ENCODE measurements at regions of chr3 and their contacts with region 1.

Region 1: GRCh38 chr3:11643605-11644087 is at the start of gene VGLL4:
- DNase-seq: peak; percentile 83 to 86
- ATAC-seq: peak; percentile 68 to 70
- H3K4me3 ChIP-seq: peak within 1 kb of the TSS; percentile 54 to 74 (median 70)
- H3K27ac ChIP-seq: peak within 1 kb of the TSS; percentile 90 to 95 (median 92)
- H3K4me1 ChIP-seq: peaks cover 28 to 32% of the 10 kb centered on the region in 2 donors
- H3K27me3 ChIP-seq: no peaks in the 10 kb centered on the region
- CTCF ChIP-seq: peak in 3 of 5 experiments; percentile 10 to 33 (median 16)
- POLR2A ChIP-seq: peak; percentile 77 to 88
- total RNA-seq, gene VGLL4: 8.9 to 20.9 (median 12.8) TPM

Region 2: GRCh38 chr3:11465744-11466616 is 177.7 kb before region 1 on chr3:
- in situ Hi-C with region 1: no loop called
- intact Hi-C with region 1: loop called (anchors 1 kb)
- DNase-seq: peak; percentile 47 to 57
- ATAC-seq: peak; percentile 52 to 72
- H3K4me3 ChIP-seq: no peak overlapping the region
- H3K27ac ChIP-seq: peak overlapping the region; percentile 83 to 87 (median 86)
- H3K4me1 ChIP-seq: peaks cover 47 to 52% of the 10 kb centered on the region in 2 donors
- H3K27me3 ChIP-seq: no peaks in the 10 kb centered on the region
- CTCF ChIP-seq: no peak
- POLR2A ChIP-seq: no peak

Region 3: DNA sequence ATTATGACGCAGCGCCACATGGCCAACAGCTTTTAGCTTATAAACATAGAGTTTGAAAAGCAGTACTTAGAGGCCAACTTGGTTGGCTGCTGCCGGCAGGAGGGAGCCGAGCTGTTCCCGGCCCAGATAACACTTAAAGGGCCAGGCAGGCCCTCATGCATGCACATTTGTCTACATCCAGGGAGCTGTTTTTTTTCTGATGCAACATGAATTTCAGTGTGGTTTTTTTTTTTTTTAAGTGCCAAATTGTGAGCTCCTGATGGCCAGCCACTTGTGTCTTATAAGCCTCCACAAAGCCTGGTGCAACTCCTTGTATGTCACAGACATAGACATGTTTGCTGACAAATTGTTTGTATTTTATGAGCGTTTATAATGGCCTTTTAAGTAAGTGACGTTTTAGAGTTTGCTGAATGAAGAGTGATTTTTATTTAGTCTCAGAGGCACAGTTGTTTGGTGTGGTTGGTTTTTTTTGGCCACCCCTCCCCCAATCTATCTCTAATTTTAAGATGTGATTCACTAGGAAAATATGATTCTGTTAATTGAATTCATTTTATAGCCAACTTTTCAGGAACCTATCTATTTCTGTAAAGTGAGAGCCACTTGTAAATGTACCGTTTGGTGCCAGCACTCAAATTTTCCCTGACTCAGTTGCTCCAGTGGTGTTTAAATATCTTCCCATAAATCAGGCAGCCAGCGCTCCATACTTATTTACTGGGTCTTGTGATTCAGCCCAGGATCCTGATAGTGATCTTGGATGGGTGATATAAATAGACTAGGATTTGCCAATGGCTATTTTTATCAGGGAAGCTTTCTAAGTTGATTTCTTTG is 134.3 kb before region 1 on chr3:
- in situ Hi-C with region 1: no loop called
- intact Hi-C with region 1: loop called (anchors 2 kb)
- DNase-seq: peak; percentile 32 to 59
- ATAC-seq: peak; percentile 86 to 89
- H3K4me3 ChIP-seq: peak overlapping the region in 2 of 4 donors; percentile 0 to 15
- H3K27ac ChIP-seq: peak overlapping the region; percentile 76 to 92 (median 87)
- H3K4me1 ChIP-seq: peaks cover 28 to 31% of the 10 kb centered on the region in 2 donors
- H3K27me3 ChIP-seq: no peaks in the 10 kb centered on the region
- CTCF ChIP-seq: peak in 2 of 5 experiments; percentile 10 to 23
- POLR2A ChIP-seq: no peak

Region 4: GRCh38 chr3:11568503-11569155 is 75.0 kb before region 1 on chr3:
- in situ Hi-C with region 1: no loop called
- intact Hi-C with region 1: loop called (anchors 1 kb)
- DNase-seq: peak; percentile 74 to 75
- ATAC-seq: peak; percentile 40 to 67
- H3K4me3 ChIP-seq: peak overlapping the region; percentile 20 to 42 (median 34)
- H3K27ac ChIP-seq: peak overlapping the region; percentile 88 to 90 (median 88)
- H3K4me1 ChIP-seq: peaks cover 42 to 54% of the 10 kb centered on the region in 2 donors
- H3K27me3 ChIP-seq: no peaks in the 10 kb centered on the region
- CTCF ChIP-seq: no peak
- POLR2A ChIP-seq: peak; percentile 11 to 22

Region 5: GRCh38 chr3:11601446-11602238 is 42.0 kb before region 1 on chr3:
- in situ Hi-C with region 1: no loop called
- intact Hi-C with region 1: loop called (anchors 1 kb)
- DNase-seq: peak in 1 of 2 donors; percentile 52
- ATAC-seq: no peak
- H3K4me3 ChIP-seq: no peak overlapping the region
- H3K27ac ChIP-seq: peak overlapping the region; percentile 71 to 88 (median 83)
- H3K4me1 ChIP-seq: peaks cover 67 to 83% of the 10 kb centered on the region in 2 donors
- H3K27me3 ChIP-seq: no peaks in the 10 kb centered on the region
- CTCF ChIP-seq: no peak
- POLR2A ChIP-seq: no peak

Region 6: GRCh38 chr3:12796171-12797123 is 1152.8 kb after region 1 on chr3 and contains the start of gene CAND2:
- in situ Hi-C with region 1: no loop called
- intact Hi-C with region 1: loop called (anchors 2 kb)
- DNase-seq: peak; percentile 72 to 85
- ATAC-seq: peak; percentile 14 to 28
- H3K4me3 ChIP-seq: peak within 1 kb of the TSS; percentile 70 to 88 (median 82)
- H3K27ac ChIP-seq: peak within 1 kb of the TSS; percentile 99 to 100 (median 99)
- H3K4me1 ChIP-seq: peaks cover 32 to 39% of the 10 kb centered on the region in 2 donors
- H3K27me3 ChIP-seq: no peaks in the 10 kb centered on the region
- CTCF ChIP-seq: no peak
- POLR2A ChIP-seq: peak; percentile 91 to 93
- total RNA-seq, gene CAND2: 133 to 308 (median 181) TPM

Measured in gastrocnemius medialis (tissue), 4 donors.